ENCODE measurements at regions of chr7 and their contacts with region 1.

Region 1: GRCh38 chr7:151351027-151351426 is 9.4 kb downstream of the NUB1 start:
- DNase-seq: peak; percentile 63
- ATAC-seq: no peak
- H3K4me3 Mint-ChIP-seq: peak overlapping the region; percentile 51
- H3K27ac Mint-ChIP-seq: peak overlapping the region; percentile 90
- H3K4me1 Mint-ChIP-seq: peaks cover 47% of the 10 kb centered on the region
- H3K27me3 Mint-ChIP-seq: no peaks in the 10 kb centered on the region

Region 2: GRCh38 chr7:151304856-151305255 is 46.2 kb before region 1 on chr7:
- CTCF ChIA-PET with region 1: interaction called, 28 read pairs
- POLR2A ChIA-PET with region 1: no interaction called
- DNase-seq: no peak
- ATAC-seq: no peak
- H3K4me3 Mint-ChIP-seq: peak overlapping the region; percentile 31
- H3K27ac Mint-ChIP-seq: no peak overlapping the region
- H3K4me1 Mint-ChIP-seq: peaks cover 23% of the 10 kb centered on the region
- H3K27me3 Mint-ChIP-seq: peaks cover 30% of the 10 kb centered on the region

Region 3: DNA sequence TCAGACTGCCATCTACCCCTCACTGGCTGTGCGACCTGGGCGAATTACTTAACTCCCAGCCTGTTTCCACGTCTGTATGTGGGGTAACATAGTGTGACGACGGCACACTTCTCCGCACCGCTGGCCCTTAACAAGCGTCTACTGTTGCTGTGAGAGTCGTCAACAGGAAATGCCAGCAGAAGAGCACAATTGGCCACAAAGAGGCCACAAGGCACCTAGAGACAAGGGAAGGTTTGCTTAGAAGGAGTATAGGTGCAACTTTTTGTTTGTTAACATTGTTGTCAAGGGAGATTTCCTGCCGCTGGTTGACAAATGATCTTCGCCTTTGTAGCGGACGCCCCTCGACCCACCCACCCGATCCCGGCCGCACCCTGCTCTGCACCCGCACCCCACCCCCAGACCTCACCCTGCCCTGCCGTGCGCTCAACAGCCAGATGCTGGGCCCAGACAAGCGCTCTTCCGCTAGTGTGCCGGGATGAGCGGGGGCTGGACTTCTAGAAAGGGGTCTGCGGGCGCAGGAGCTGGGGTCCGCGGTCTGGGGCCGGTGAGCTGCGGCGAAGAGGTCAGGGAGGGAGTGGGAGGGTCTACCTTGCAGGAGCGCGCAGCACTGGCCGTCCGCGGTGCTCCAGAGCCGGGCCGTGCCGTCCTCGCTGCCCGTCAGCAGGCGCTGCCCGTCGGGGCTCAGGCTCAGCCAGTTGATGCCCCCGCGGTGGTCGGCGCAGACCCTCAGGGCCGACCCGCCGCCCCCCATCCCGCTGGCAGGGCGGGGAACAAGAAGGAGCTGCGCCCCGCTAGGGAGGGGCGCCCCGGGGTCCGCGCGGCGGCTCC is 58.0 kb after region 1 on chr7:
- CTCF ChIA-PET with region 1: no interaction called
- POLR2A ChIA-PET with region 1: no interaction called
- DNase-seq: peak; percentile 69
- ATAC-seq: peak; percentile 89
- H3K4me3 Mint-ChIP-seq: peak overlapping the region; percentile 40
- H3K27ac Mint-ChIP-seq: peak overlapping the region; percentile 54
- H3K4me1 Mint-ChIP-seq: peaks cover 13% of the 10 kb centered on the region
- H3K27me3 Mint-ChIP-seq: peaks cover 46% of the 10 kb centered on the region